ENCODE measurements at regions of chr12 and their contacts with region 1.

Region 1: GRCh38 chr12:7092229-7092985 is at the start of gene C1R:
- DNase-seq: peak; percentile 57 to 83 (median 66)
- ATAC-seq: peak; percentile 79
- H3K4me3 ChIP-seq: peak within 1 kb of the TSS; percentile 52
- H3K4me3 Mint-ChIP-seq: peak within 1 kb of the TSS; percentile 88
- H3K27ac ChIP-seq: no peak within 1 kb of the TSS
- H3K27ac Mint-ChIP-seq: peak within 1 kb of the TSS; percentile 53
- H3K4me1 ChIP-seq: peaks cover 13% of the 10 kb centered on the region
- H3K4me1 Mint-ChIP-seq: peaks cover 8% of the 10 kb centered on the region
- H3K27me3 ChIP-seq: no peaks in the 10 kb centered on the region
- H3K27me3 Mint-ChIP-seq: no peaks in the 10 kb centered on the region
- CTCF ChIP-seq: peak; percentile 82
- total RNA-seq, gene C1R: 3.1 to 4.0 TPM

Region 2: DNA sequence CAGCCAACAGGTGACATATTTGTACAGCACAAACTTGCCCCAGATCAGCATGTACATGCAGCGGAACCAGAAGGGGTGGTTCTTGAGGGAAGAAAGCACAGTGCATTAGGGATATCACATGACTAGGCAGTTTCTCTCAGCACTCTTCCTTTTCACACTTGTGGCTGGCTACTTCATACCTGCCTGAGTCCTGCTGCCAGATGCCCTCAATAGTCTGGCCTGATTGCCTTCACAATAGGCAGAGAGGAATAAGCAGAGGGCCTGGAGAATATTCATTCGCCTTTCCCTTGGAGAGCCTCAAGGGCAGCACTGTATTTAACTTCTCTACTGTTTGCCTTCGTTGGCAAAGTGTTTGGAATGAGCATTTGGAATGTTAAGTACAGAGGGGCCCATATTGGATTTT is 113.8 kb before region 1 on chr12:
- CTCF ChIA-PET with region 1: no interaction called
- POLR2A ChIA-PET with region 1: no interaction called
- intact Hi-C with region 1: loop called in 1 of 2 experiments (anchors 5 kb)
- DNase-seq: no peak
- ATAC-seq: no peak
- H3K4me3 ChIP-seq: no peak overlapping the region
- H3K4me3 Mint-ChIP-seq: no peak overlapping the region
- H3K27ac ChIP-seq: no peak overlapping the region
- H3K27ac Mint-ChIP-seq: no peak overlapping the region
- H3K4me1 ChIP-seq: no peaks in the 10 kb centered on the region
- H3K4me1 Mint-ChIP-seq: peaks cover 5% of the 10 kb centered on the region
- H3K27me3 ChIP-seq: no peaks in the 10 kb centered on the region
- H3K27me3 Mint-ChIP-seq: no peaks in the 10 kb centered on the region
- CTCF ChIP-seq: no peak